PC-3 (cell line): ENCODE measurements at regions of chr11 and their contacts with region 1.

Region 1: DNA sequence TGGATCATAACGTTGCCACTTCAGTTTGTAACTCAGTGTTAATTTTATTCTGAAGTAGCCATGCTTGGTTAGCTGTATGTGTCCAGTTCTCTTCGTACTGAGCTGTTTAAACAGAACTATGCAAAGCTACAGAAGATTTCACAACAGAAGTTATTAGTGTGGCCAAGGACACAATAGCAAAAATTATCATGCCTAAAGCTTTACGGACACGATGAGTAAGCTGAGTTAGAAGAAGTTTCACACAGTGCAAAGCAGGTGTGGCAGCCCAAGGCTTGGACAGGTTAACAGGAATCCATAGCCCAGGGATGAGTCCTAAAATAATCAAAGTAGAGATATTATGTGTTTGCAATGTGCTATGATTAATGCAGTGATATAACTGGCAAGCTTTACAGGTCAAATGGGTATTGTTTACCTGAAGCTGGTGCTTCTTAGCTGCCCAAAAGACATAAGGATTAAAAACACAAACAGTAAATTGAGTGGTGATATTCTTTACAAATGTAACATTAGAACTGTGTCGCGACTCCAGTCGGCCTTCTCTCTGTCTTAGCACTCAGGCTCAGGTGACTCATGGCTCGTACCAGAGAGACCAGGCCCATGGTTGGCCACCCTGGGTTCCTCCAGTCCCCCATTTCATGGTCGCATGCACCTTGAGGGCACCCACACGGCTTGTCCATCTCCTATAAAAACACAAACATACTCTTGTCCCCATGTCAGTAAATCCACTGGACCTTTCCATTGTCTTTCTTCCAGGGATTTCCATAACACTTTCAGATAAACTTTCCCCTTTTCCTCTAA is 35.5 kb upstream of the NCAM1 start:
- DNase-seq: peak; percentile 13
- ATAC-seq: no peak
- H3K4me3 ChIP-seq: no peak overlapping the region
- H3K27ac ChIP-seq: no peak overlapping the region
- H3K4me1 ChIP-seq: no peaks in the 10 kb centered on the region
- H3K27me3 ChIP-seq: peaks cover 20% of the 10 kb centered on the region
- CTCF ChIP-seq: no peak

Region 2: DNA sequence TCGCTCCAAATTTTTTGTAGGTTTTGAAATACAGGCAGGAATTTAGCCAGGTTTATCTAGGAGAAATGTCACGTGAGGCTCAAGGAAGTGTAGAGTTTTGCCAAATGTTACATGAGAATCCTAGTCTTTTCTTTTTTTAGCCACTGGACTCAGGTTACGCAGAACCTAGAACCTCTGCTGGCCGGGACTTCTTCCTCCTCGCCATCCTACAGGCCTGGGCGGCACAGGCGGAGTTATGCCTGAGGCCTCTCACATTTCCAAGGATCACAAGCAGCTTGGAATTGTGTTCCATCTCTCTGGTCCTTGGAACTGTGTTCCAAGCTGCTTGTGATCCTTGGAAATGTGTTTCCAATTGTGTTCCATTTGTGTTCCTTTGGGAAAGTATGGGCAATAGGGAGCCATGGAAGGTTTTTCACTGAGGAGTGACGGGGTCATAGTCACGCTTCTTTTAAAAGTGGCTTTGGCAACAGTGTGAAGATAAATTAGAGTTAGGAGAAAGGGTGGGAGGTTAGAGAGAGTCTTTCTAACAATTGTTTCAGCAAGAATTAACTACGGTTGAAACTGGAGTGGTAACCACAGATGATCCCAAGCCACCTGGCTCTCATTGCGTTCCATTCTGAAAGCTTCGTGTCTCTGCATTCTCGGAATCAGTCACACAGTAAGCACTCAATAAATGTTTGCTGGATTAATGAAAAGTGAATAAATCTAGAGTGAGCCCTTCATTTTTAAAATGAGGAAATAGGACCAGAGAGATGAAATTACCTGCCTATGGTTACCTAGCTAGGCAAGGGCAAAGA is 1534.2 kb before region 1 on chr11:
- CTCF ChIA-PET with region 1: no interaction called
- POLR2A ChIA-PET with region 1: interaction called, 11 read pairs
- intact Hi-C with region 1: no loop called
- DNase-seq: no peak
- ATAC-seq: no peak
- H3K4me3 ChIP-seq: no peak overlapping the region
- H3K27ac ChIP-seq: no peak overlapping the region
- H3K4me1 ChIP-seq: no peaks in the 10 kb centered on the region
- H3K27me3 ChIP-seq: peaks cover 40% of the 10 kb centered on the region
- CTCF ChIP-seq: no peak

Region 3: GRCh38 chr11:112999520-112999919 is 73.8 kb after region 1 on chr11:
- CTCF ChIA-PET with region 1: no interaction called
- POLR2A ChIA-PET with region 1: no interaction called
- intact Hi-C with region 1: no loop called
- DNase-seq: no peak
- ATAC-seq: no peak
- H3K4me3 ChIP-seq: no peak overlapping the region
- H3K27ac ChIP-seq: no peak overlapping the region
- H3K4me1 ChIP-seq: no peaks in the 10 kb centered on the region
- H3K27me3 ChIP-seq: peaks cover 23% of the 10 kb centered on the region
- CTCF ChIP-seq: no peak